K562 (cell line): ENCODE measurements at regions of chr20 and their contacts with region 1.

Region 1: GRCh38 chr20:34689486-34689885 is 12.6 kb upstream of the PIGU start:
- DNase-seq: no peak
- ATAC-seq: peak; percentile 31; the same call in 1 of the 3 replicates
- H3K4me3 ChIP-seq: no peak overlapping the region
- H3K27ac ChIP-seq: no peak overlapping the region
- H3K4me1 ChIP-seq: peaks cover 0 to 8% of the 10 kb centered on the region in 2 experiments; a peak in 3 of 5 replicates
- H3K27me3 ChIP-seq: no peaks in the 10 kb centered on the region
- CTCF ChIP-seq: no peak
- EP300 ChIP-seq: no peak
- POLR2A ChIP-seq: no peak
- RAD21 ChIP-seq: no peak

Region 2: DNA sequence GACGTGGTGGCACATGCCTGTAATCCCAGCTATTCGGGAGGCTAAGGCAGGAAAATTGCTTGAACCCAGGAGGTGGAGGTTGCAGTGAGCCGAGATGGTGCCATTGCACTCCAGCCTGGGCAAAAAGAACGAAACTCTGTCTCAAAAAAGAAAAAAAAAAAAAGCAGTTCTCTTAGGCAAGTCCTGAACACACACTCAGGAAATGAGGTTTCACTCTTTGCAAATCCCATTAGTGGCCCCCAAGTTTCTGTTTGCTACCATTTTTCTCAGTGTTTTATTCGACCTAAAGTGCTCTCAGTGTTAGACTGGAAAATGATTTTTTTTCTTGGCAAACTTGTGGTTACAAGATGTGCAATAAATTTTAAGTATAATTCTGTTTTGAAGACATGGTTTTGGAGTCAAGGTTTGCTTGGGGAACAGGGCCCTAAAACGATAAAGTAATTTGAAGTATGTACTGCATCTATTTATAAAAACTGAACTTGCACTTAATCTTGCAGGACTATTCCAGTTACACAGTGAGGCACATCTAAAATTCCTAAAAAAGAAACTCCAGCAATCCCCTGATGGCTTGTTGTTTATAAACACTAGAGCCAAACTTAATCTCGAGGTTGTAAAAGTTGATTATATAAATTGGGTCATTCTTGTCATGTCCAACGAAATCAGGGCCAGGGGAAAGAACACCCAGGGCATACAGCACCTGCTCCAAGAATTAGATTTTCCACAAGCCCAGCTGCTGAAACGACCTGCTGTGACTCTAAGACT is 88.4 kb before region 1 on chr20:
- CTCF ChIA-PET with region 1: no interaction called
- POLR2A ChIA-PET with region 1: no interaction called
- in situ Hi-C with region 1: no loop called
- intact Hi-C with region 1: no loop called
- DNase-seq: no peak
- ATAC-seq: no peak
- H3K4me3 ChIP-seq: no peak overlapping the region
- H3K27ac ChIP-seq: no peak overlapping the region
- H3K4me1 ChIP-seq: no peaks in the 10 kb centered on the region; a peak in 1 of 5 replicates
- H3K27me3 ChIP-seq: no peaks in the 10 kb centered on the region
- CTCF ChIP-seq: no peak
- EP300 ChIP-seq: no peak
- POLR2A ChIP-seq: no peak
- RAD21 ChIP-seq: no peak

Region 3: DNA sequence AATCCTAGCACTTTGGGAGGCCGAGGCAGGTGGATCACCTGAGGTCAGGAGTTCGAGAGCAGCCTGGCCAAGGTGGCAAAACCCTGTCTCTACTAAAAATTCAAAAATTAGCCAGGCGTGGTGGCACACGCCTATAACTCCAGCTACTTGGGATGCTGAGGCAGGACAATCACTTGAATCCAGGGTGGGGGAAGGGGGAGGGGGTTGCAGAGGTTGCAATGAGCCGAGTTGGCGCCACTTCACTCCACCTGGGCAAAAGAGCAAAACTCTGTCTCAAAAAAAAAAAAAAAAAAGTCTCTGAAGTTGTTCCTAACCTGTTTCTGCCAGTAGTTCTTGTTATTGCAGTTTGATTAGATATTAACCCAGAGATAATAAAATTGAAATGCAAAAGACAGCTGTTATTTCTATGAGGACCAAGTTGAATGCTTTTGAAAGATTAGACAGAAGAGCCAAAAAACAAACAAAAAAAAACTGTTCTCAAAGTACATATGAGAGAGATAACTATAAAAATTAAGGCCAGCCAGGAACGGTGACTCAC is 35.2 kb before region 1 on chr20:
- CTCF ChIA-PET with region 1: no interaction called
- POLR2A ChIA-PET with region 1: no interaction called
- in situ Hi-C with region 1: no loop called
- intact Hi-C with region 1: no loop called
- DNase-seq: no peak
- ATAC-seq: no peak
- H3K4me3 ChIP-seq: no peak overlapping the region
- H3K27ac ChIP-seq: no peak overlapping the region
- H3K4me1 ChIP-seq: no peaks in the 10 kb centered on the region
- H3K27me3 ChIP-seq: no peaks in the 10 kb centered on the region
- CTCF ChIP-seq: no peak
- EP300 ChIP-seq: no peak
- POLR2A ChIP-seq: no peak
- RAD21 ChIP-seq: no peak

Region 4: GRCh38 chr20:34676642-34677373 is 12.7 kb before region 1 on chr20 and contains the start of gene PIGU:
- CTCF ChIA-PET with region 1: no interaction called
- POLR2A ChIA-PET with region 1: interaction called, 16 read pairs
- in situ Hi-C with region 1: no loop called
- intact Hi-C with region 1: no loop called
- DNase-seq: peak; percentile 91 to 98 (median 96)
- ATAC-seq: peak; percentile 98
- H3K4me3 ChIP-seq: peak within 1 kb of the TSS; percentile 94
- H3K27ac ChIP-seq: peak within 1 kb of the TSS; percentile 89
- H3K4me1 ChIP-seq: peaks cover 12 to 15% of the 10 kb centered on the region in 2 experiments; a peak in 4 of 5 replicates
- H3K27me3 ChIP-seq: no peaks in the 10 kb centered on the region
- CTCF ChIP-seq: no peak
- EP300 ChIP-seq: no peak
- POLR2A ChIP-seq: peak; percentile 93
- RAD21 ChIP-seq: no peak
- polyA plus RNA-seq, gene PIGU: 6.5 to 14.2 TPM

Region 5: GRCh38 chr20:34704177-34705007 is 14.9 kb after region 1 on chr20 and contains the start of gene TP53INP2:
- CTCF ChIA-PET with region 1: no interaction called
- POLR2A ChIA-PET with region 1: interaction called, 14 read pairs
- in situ Hi-C with region 1: no loop called
- intact Hi-C with region 1: no loop called
- DNase-seq: peak; percentile 95 to 96 (median 95)
- ATAC-seq: peak; percentile 76
- H3K4me3 ChIP-seq: peak within 1 kb of the TSS; percentile 92
- H3K27ac ChIP-seq: peak within 1 kb of the TSS; percentile 92
- H3K4me1 ChIP-seq: peaks cover 16 to 28% of the 10 kb centered on the region in 2 experiments
- H3K27me3 ChIP-seq: no peaks in the 10 kb centered on the region
- CTCF ChIP-seq: no peak
- EP300 ChIP-seq: no peak
- POLR2A ChIP-seq: 0 out of 2 replicates have a peak, but pooled peaks have one; percentile 42
- RAD21 ChIP-seq: no peak
- polyA plus RNA-seq, gene TP53INP2: 1.0 to 1.1 TPM

Region 6: DNA sequence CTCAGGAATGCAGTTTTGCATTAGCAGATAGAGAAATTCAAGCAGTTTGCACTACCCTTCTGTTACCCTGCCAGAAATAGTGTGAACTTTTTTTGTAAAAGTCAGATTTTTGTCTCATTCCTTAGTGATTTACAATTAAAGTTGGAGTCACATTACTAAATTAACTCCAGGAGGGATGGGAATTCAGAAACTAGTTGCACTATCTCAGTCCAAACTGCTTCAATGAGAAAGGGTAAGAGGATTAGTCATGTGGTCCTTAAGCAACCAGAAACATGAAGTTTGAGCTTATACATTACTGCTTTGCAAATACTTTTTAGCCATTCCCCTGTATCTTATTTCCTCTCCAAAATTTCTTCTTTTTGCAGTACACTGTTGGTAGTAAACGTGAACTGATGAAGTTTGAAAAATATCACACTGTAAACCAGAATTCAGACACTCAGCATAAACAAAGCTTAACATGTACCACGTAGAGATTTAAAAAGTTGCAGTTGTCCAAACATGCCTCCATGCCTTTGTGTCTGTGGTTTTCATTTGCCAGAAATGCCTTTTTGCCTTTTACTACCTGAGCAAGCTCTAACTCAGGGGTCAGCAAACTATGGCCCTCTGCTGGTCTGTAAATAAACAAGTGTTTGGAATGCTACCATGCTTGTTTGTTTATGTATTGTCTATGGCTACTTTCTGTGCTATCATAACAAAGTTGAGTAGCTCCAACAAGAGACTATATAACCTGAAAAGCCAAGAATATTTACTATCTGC is 64.4 kb after region 1 on chr20:
- CTCF ChIA-PET with region 1: no interaction called
- POLR2A ChIA-PET with region 1: no interaction called
- in situ Hi-C with region 1: no loop called
- intact Hi-C with region 1: no loop called
- DNase-seq: no peak
- ATAC-seq: no peak
- H3K4me3 ChIP-seq: no peak overlapping the region
- H3K27ac ChIP-seq: no peak overlapping the region
- H3K4me1 ChIP-seq: no peaks in the 10 kb centered on the region
- H3K27me3 ChIP-seq: no peaks in the 10 kb centered on the region
- CTCF ChIP-seq: no peak; a peak in 1 of 6 replicates
- EP300 ChIP-seq: no peak
- POLR2A ChIP-seq: no peak
- RAD21 ChIP-seq: no peak; a peak in 1 of 4 replicates

Region 7: GRCh38 chr20:35318502-35319157 is 629.1 kb after region 1 on chr20:
- CTCF ChIA-PET with region 1: no interaction called
- POLR2A ChIA-PET with region 1: no interaction called
- in situ Hi-C with region 1: no loop called
- intact Hi-C with region 1: no loop called
- DNase-seq: no peak
- ATAC-seq: peak; percentile 28; the same call in 1 of the 3 replicates
- H3K4me3 ChIP-seq: no peak overlapping the region
- H3K27ac ChIP-seq: no peak overlapping the region
- H3K4me1 ChIP-seq: peaks cover 4 to 6% of the 10 kb centered on the region in 2 experiments; a peak in 4 of 5 replicates
- H3K27me3 ChIP-seq: no peaks in the 10 kb centered on the region
- CTCF ChIP-seq: no peak
- EP300 ChIP-seq: no peak
- POLR2A ChIP-seq: no peak
- RAD21 ChIP-seq: no peak